Colonic mucosa (tissue), 4 donors: ENCODE measurements at regions of chr12 and their contacts with region 1.

Region 1: GRCh38 chr12:65121049-65121955 is at the start of gene WIF1:
- DNase-seq: no peak
- H3K4me3 ChIP-seq: peak within 1 kb of the TSS; percentile 19
- H3K27ac ChIP-seq: no peak within 1 kb of the TSS
- H3K4me1 ChIP-seq: peaks cover 10% of the 10 kb centered on the region
- H3K27me3 ChIP-seq: peaks cover 36% of the 10 kb centered on the region
- CTCF ChIP-seq: peak; percentile 27
- total RNA-seq, gene WIF1: 0.20 TPM in 1 of 2 donors, not detected in the other

Region 2: GRCh38 chr12:64796208-64796845 is 325.0 kb before region 1 on chr12:
- intact Hi-C with region 1: loop called (anchors 2 kb)
- DNase-seq: peak; percentile 79
- H3K4me3 ChIP-seq: no peak overlapping the region
- H3K27ac ChIP-seq: no peak overlapping the region
- H3K4me1 ChIP-seq: no peaks in the 10 kb centered on the region
- H3K27me3 ChIP-seq: no peaks in the 10 kb centered on the region
- CTCF ChIP-seq: peak; percentile 81

Region 3: GRCh38 chr12:64998371-64999147 is 122.7 kb before region 1 on chr12:
- intact Hi-C with region 1: no loop called
- DNase-seq: no peak
- H3K4me3 ChIP-seq: no peak overlapping the region
- H3K27ac ChIP-seq: no peak overlapping the region
- H3K4me1 ChIP-seq: no peaks in the 10 kb centered on the region
- H3K27me3 ChIP-seq: no peaks in the 10 kb centered on the region
- CTCF ChIP-seq: no peak

Region 4: DNA sequence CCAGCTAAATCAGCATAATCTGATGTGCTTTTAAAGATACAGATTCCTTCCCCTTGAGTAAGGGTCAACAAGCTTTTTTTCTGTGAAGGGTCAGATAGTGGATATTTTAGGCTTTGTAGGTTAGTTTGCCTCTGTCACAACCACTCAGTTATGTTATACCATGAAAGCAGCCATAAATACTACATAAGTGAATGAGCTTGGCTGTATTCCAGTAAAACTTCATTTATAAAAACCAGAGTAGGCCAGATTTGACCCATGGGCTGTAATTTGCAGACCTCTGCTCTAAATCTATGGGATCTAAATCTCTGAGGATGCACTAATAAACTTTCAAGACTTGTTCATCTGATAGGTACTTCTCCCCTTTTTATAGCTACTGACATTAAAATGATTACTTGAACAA is 95.8 kb after region 1 on chr12:
- intact Hi-C with region 1: no loop called
- DNase-seq: no peak
- H3K4me3 ChIP-seq: no peak overlapping the region
- H3K27ac ChIP-seq: no peak overlapping the region
- H3K4me1 ChIP-seq: no peaks in the 10 kb centered on the region
- H3K27me3 ChIP-seq: no peaks in the 10 kb centered on the region
- CTCF ChIP-seq: no peak